Activated CD4-positive, alpha-beta T cell treated with anti-CD3 and anti-CD28 coated beads for 36 hours (primary cell): ENCODE measurements at regions of chr15 and their contacts with region 1.

Region 1: DNA sequence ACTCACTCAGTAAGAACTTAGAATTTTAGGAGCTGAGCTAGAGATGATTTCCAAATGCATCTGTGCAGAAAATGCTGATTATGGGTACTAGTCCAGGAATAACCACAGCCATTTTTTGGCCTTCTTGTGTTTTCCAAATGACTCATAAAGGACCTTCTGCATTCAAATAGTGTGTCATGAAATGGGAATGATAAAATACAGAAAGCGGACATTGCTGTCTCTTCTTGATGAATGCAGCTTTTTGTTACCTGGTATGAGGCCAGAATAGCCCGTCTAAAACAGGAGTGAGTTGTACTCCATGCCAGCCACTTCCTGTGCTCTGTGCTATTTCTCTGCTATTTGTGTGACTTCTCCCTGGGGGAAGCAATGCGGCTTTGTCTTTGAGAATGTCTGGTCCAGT is 20.5 kb upstream of the FRMD5 start:
- DNase-seq: no peak
- ATAC-seq: no peak
- H3K4me3 Mint-ChIP-seq: no peak overlapping the region
- H3K27ac Mint-ChIP-seq: no peak overlapping the region
- H3K4me1 Mint-ChIP-seq: peaks cover 2% of the 10 kb centered on the region
- H3K27me3 Mint-ChIP-seq: peaks cover 13% of the 10 kb centered on the region

Region 2: GRCh38 chr15:43903864-43904290 is 311.7 kb before region 1 on chr15:
- CTCF ChIA-PET with region 1: interaction called, 4 read pairs
- POLR2A ChIA-PET with region 1: no interaction called
- intact Hi-C with region 1: loop called (anchors 1 kb)
- DNase-seq: peak; percentile 72
- ATAC-seq: peak; percentile 83
- H3K4me3 Mint-ChIP-seq: no peak overlapping the region
- H3K27ac Mint-ChIP-seq: no peak overlapping the region
- H3K4me1 Mint-ChIP-seq: peaks cover 2% of the 10 kb centered on the region
- H3K27me3 Mint-ChIP-seq: no peaks in the 10 kb centered on the region

Region 3: DNA sequence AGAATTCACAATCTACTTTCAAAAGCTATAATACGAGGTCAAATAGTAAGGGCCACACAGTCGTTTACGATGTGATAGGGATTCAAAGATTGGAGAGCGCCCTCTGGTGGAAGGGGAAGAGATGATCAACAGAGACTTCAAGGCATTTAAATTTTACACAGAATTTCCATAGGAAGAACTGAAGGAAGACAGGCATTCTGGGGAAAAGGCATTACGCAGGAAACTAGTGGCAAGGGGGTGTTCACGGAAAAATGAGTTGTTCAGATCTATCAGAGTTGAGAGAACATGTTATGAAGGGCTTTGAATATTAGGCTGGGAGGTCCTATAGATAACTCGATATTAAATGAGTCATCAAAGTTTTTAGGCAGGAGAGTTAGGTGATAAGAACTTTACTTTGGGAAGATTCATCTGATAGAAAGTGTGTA is 149.3 kb before region 1 on chr15:
- CTCF ChIA-PET with region 1: interaction called, 4 read pairs
- POLR2A ChIA-PET with region 1: no interaction called
- intact Hi-C with region 1: loop called in 1 of 2 experiments (anchors 5 kb)
- DNase-seq: peak; percentile 80
- ATAC-seq: peak; percentile 68
- H3K4me3 Mint-ChIP-seq: no peak overlapping the region
- H3K27ac Mint-ChIP-seq: no peak overlapping the region
- H3K4me1 Mint-ChIP-seq: peaks cover 4% of the 10 kb centered on the region
- H3K27me3 Mint-ChIP-seq: peaks cover 14% of the 10 kb centered on the region

Region 4: GRCh38 chr15:44173813-44174212 is 41.8 kb before region 1 on chr15:
- CTCF ChIA-PET with region 1: no interaction called
- POLR2A ChIA-PET with region 1: no interaction called
- intact Hi-C with region 1: no loop called
- DNase-seq: no peak
- ATAC-seq: no peak
- H3K4me3 Mint-ChIP-seq: no peak overlapping the region
- H3K27ac Mint-ChIP-seq: no peak overlapping the region
- H3K4me1 Mint-ChIP-seq: no peaks in the 10 kb centered on the region
- H3K27me3 Mint-ChIP-seq: peaks cover 18% of the 10 kb centered on the region

Region 5: DNA sequence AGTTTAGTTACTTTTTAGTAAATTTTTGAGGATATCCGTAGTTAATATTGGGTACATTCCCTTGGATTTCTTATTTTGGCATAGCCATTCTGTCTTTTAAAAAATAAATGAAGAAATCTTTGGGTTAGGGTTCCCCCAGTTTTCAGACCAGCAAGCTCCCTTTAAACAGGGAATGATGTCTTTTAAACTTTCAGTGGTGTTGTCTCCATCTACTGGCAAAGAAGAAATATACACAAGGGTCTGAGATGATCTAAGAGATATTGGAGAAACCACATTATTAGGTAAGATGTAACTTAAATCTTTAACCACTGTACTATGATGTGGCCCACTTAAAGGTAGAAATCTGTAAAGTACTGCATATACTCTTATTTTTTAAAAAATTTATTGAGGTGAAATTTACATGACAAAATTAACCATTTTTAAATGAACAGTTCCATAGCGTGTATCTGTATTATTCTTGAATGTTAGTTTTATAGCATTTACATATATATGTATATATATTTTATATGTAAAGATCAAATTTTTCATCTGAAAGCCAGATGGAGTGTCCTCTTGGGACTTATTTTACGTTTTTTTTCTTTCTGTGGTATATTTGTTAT is 286.3 kb after region 1 on chr15:
- CTCF ChIA-PET with region 1: interaction called, 5 read pairs
- POLR2A ChIA-PET with region 1: no interaction called
- intact Hi-C with region 1: loop called in 1 of 2 experiments (anchors 1 kb)
- DNase-seq: no peak
- ATAC-seq: peak; percentile 48
- H3K4me3 Mint-ChIP-seq: no peak overlapping the region
- H3K27ac Mint-ChIP-seq: no peak overlapping the region
- H3K4me1 Mint-ChIP-seq: peaks cover 22% of the 10 kb centered on the region
- H3K27me3 Mint-ChIP-seq: no peaks in the 10 kb centered on the region